GM12878 (cell line): ENCODE measurements at regions of chr12 and their contacts with region 1.

Region 1: DNA sequence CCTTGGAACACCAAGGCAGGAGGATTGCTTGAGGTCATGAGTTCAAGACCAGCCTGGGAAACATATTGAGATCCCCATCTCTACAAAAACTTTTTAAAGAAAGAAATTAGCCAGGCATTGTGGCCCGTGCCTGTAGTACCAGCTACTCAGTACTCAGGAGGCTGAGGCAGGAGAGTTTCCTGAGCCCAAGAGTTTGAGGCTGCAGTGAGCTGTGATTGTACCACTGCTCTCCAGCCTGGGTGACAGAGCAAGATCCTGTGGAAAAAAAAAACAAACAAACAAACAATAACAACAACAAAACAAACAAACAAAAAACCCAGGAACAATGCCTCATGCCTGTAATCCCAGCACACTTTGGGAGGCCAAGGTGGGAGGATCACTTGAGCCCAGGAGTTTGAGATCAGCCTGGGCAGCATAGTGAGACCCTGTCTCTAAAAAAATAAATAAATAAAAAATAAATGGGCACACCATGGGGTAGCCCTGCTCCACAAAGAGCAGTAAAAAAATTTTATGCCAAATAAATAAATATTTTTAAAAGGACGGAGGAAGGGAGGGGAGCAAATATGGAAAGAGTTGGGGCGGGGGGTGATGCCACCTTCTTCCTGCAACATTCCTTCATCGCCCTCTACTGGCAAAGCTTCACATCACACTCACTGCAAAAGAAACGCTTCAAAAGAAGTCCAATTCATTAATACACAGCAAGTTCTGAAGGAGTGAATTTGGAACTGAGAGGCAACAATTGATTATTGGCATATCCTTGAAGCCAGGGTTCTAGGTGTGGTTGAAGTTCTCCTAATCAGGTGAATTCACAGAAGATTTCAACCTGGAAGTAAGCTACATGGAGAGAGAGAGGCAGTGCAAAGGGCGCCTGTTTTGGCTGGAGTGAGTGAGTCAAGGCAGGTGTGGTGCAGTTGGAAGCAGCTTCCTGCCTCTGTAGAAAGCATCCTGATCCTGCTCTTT is 8.8 kb upstream of the GNPTAB start:
- DNase-seq: no peak
- ATAC-seq: peak; percentile 84
- H3K4me3 ChIP-seq: no peak overlapping the region
- H3K27ac ChIP-seq: peak overlapping the region; percentile 54
- H3K4me1 ChIP-seq: peaks cover 15% of the 10 kb centered on the region
- H3K27me3 ChIP-seq: no peaks in the 10 kb centered on the region
- CTCF ChIP-seq: peak; percentile 76 to 86 (median 80)
- EP300 ChIP-seq: no peak
- POLR2A ChIP-seq: no peak
- RAD21 ChIP-seq: peak; percentile 78

Region 2: DNA sequence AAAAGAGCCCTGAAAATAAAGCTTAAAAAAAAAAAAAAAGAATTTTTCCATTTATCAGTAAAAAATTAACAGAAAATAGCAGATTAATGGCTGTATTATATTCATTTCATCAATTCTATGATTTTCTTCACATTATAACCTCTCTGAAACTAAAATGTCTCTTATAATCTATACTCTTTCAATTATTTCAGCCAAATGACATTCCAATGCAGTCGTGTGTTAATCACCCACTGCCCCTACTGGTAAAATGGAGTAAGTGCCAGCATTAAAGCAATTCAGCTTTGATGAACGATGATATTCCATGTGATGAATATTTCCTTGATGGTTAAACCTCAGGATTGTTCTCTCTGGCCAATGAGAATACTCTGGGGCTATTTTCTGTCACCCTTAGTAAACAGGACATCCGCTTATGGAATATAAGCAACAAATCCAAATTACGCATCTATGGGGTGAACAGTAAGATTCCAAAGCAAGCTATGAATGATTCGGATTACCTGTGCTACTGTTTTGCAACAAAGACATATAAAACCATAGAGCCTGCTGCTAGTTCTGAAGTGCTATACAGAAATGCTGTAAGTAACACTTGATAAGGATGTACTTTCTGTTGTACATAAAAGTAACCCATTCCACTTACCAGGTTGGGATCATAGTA is 80.1 kb before region 1 on chr12:
- CTCF ChIA-PET with region 1: interaction called, 6 read pairs
- POLR2A ChIA-PET with region 1: no interaction called
- RAD21 ChIA-PET with region 1: interaction called, 12 read pairs
- SMC1A ChIA-PET with region 1: interaction called, 4 read pairs
- in situ Hi-C with region 1: no loop called
- intact Hi-C with region 1: no loop called
- DNase-seq: no peak
- ATAC-seq: peak; percentile 80
- H3K4me3 ChIP-seq: no peak overlapping the region
- H3K27ac ChIP-seq: no peak overlapping the region
- H3K4me1 ChIP-seq: no peaks in the 10 kb centered on the region
- H3K27me3 ChIP-seq: no peaks in the 10 kb centered on the region
- CTCF ChIP-seq: peak; percentile 68 to 83 (median 76)
- EP300 ChIP-seq: no peak
- POLR2A ChIP-seq: no peak
- RAD21 ChIP-seq: peak; percentile 87

Region 3: GRCh38 chr12:101792051-101792931 is 47.3 kb before region 1 on chr12:
- CTCF ChIA-PET with region 1: interaction called, 29 read pairs
- POLR2A ChIA-PET with region 1: interaction called, 5 read pairs
- RAD21 ChIA-PET with region 1: no interaction called
- SMC1A ChIA-PET with region 1: interaction called, 7 read pairs
- in situ Hi-C with region 1: no loop called
- intact Hi-C with region 1: no loop called
- DNase-seq: no peak
- ATAC-seq: peak; percentile 38; the same call in 1 of the 3 replicates
- H3K4me3 ChIP-seq: no peak overlapping the region
- H3K27ac ChIP-seq: no peak overlapping the region
- H3K4me1 ChIP-seq: peaks cover 10% of the 10 kb centered on the region
- H3K27me3 ChIP-seq: no peaks in the 10 kb centered on the region
- CTCF ChIP-seq: peak; percentile 15 to 36 (median 19); a peak in 4 of 6 replicates
- EP300 ChIP-seq: no peak
- POLR2A ChIP-seq: no peak
- RAD21 ChIP-seq: peak; percentile 17; the same call in 1 of the 2 replicates

Region 4: GRCh38 chr12:101850199-101850598 is 10.6 kb after region 1 on chr12:
- CTCF ChIA-PET with region 1: interaction called, 47 read pairs
- POLR2A ChIA-PET with region 1: interaction called, 6 read pairs
- RAD21 ChIA-PET with region 1: interaction called, 7 read pairs
- SMC1A ChIA-PET with region 1: interaction called, 7 read pairs
- in situ Hi-C with region 1: no loop called
- intact Hi-C with region 1: no loop called
- DNase-seq: no peak
- ATAC-seq: peak; percentile 66
- H3K4me3 ChIP-seq: no peak overlapping the region
- H3K27ac ChIP-seq: no peak overlapping the region
- H3K4me1 ChIP-seq: peaks cover 17% of the 10 kb centered on the region
- H3K27me3 ChIP-seq: no peaks in the 10 kb centered on the region
- CTCF ChIP-seq: no peak
- EP300 ChIP-seq: peak in 1 of 2 experiments; percentile 30; a peak in 2 of 4 replicates
- POLR2A ChIP-seq: no peak
- RAD21 ChIP-seq: no peak

Region 5: GRCh38 chr12:101876861-101877815 is 37.5 kb after region 1 on chr12 and contains the start of gene DRAM1:
- CTCF ChIA-PET with region 1: interaction called, 12 read pairs
- POLR2A ChIA-PET with region 1: interaction called, 3 read pairs
- RAD21 ChIA-PET with region 1: interaction called, 4 read pairs
- SMC1A ChIA-PET with region 1: interaction called, 6 read pairs
- in situ Hi-C with region 1: no loop called
- intact Hi-C with region 1: no loop called
- DNase-seq: no peak
- ATAC-seq: peak; percentile 87
- H3K4me3 ChIP-seq: peak within 1 kb of the TSS; percentile 89
- H3K27ac ChIP-seq: peak within 1 kb of the TSS; percentile 97
- H3K4me1 ChIP-seq: peaks cover 5% of the 10 kb centered on the region
- H3K27me3 ChIP-seq: no peaks in the 10 kb centered on the region
- CTCF ChIP-seq: peak; percentile 10 to 40 (median 36); a peak in 3 of 6 replicates
- EP300 ChIP-seq: no peak
- POLR2A ChIP-seq: peak; percentile 89
- RAD21 ChIP-seq: peak; percentile 43; the same call in 1 of the 2 replicates
- polyA plus RNA-seq, gene DRAM1: 22.4 to 34.8 TPM

Region 6: DNA sequence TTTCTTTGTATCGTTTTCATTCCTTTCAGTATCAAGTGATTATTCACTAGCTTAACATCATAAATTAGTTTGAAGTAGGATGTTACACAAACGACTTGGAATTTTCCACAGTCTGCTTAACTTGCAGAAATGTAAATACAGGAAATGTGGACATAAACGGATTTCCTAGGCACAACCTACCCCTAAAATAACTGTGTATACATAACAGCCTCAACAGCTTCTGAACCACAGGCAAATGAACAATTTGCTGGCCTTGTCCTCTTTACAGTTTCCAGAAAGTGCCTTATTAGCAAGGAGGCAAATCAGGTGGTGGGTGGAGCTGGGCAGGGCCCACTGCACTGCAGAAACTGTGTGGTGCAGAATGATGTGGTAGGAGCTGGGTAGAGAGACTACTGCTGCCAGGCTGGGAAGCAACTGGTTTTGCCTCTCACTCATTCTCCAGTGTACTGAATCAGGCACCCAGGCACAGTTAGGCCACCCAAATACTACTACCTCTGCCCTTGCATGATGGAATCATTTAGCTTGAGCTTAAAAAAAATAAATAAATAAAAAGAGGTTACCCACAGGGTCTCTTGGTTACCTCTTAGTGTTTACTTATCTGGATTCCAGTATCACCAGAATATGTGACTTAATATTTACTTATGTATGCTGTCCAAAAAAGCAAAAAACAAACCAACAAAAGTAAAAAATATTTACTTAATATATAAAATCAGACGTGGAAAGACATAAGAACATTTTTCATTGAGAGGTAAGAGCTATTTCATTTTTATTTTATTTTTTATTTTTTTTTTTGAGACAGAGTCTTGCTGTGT is 52.1 kb after region 1 on chr12:
- CTCF ChIA-PET with region 1: interaction called, 24 read pairs
- POLR2A ChIA-PET with region 1: no interaction called
- RAD21 ChIA-PET with region 1: interaction called, 7 read pairs
- SMC1A ChIA-PET with region 1: interaction called, 7 read pairs
- in situ Hi-C with region 1: no loop called
- intact Hi-C with region 1: no loop called
- DNase-seq: peak; percentile 75
- ATAC-seq: peak; percentile 92
- H3K4me3 ChIP-seq: 0 out of 2 replicates have a peak overlapping the region, but pooled peaks have one; percentile 25
- H3K27ac ChIP-seq: peak overlapping the region; percentile 41
- H3K4me1 ChIP-seq: peaks cover 11% of the 10 kb centered on the region
- H3K27me3 ChIP-seq: no peaks in the 10 kb centered on the region
- CTCF ChIP-seq: no peak
- EP300 ChIP-seq: no peak
- POLR2A ChIP-seq: peak; percentile 40; the same call in 1 of the 2 replicates
- RAD21 ChIP-seq: no peak